CD8-positive, alpha-beta T cell (primary cell): ENCODE measurements at regions of chr3 and their contacts with region 1.

Region 1: GRCh38 chr3:111071257-111072015 is at the start of gene NECTIN3:
- DNase-seq: peak; percentile 64 to 94 (median 85)
- ATAC-seq: peak; percentile 93
- H3K4me3 ChIP-seq: peak within 1 kb of the TSS; percentile 69 to 75
- H3K4me3 Mint-ChIP-seq: peak within 1 kb of the TSS; percentile 98
- H3K27ac ChIP-seq: peak within 1 kb of the TSS in 1 of 2 experiments; percentile 57
- H3K27ac Mint-ChIP-seq: peak within 1 kb of the TSS; percentile 89
- H3K4me1 ChIP-seq: peaks cover 12% of the 10 kb centered on the region
- H3K4me1 Mint-ChIP-seq: peaks cover 35% of the 10 kb centered on the region
- H3K27me3 ChIP-seq: peaks cover 0 to 5% of the 10 kb centered on the region in 2 experiments
- H3K27me3 Mint-ChIP-seq: peaks cover 30% of the 10 kb centered on the region
- CTCF ChIP-seq: no peak
- total RNA-seq, gene NECTIN3: 7.6 to 9.2 TPM

Region 2: DNA sequence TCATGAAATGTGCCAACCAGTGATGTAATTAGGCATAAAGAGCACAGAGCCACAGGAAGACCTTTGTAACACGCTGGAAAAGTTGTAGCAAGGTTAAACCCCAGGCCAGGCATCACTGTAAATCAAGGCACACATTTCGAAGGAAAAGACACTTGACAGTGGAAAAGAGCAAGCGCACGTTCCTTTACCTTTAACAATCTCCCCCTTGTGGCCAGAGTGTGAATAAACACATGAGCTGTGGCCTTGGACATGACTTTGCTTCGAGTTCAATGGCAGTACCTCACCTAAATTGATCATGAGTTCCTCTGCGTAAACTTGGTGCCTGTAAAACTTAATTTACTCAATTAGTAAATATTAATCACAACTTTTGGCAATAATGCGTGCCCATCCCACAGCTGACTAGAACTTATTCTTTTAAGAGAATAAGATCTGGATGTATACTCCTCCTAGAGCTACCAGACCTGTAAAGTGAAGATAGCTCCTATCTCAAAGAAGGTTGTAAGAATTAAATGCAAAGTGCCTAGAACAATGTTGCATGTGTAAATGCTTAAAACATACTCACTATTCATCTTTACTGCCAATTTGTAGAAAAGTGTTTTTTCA is 756.8 kb before region 1 on chr3:
- CTCF ChIA-PET with region 1: interaction called, 3 read pairs
- POLR2A ChIA-PET with region 1: no interaction called
- intact Hi-C with region 1: loop called in 1 of 2 experiments (anchors 10 kb)
- DNase-seq: peak; percentile 1 to 72 (median 55)
- ATAC-seq: peak; percentile 70
- H3K4me3 ChIP-seq: no peak overlapping the region
- H3K4me3 Mint-ChIP-seq: no peak overlapping the region
- H3K27ac ChIP-seq: no peak overlapping the region
- H3K27ac Mint-ChIP-seq: no peak overlapping the region
- H3K4me1 ChIP-seq: no peaks in the 10 kb centered on the region
- H3K4me1 Mint-ChIP-seq: peaks cover 2% of the 10 kb centered on the region
- H3K27me3 ChIP-seq: no peaks in the 10 kb centered on the region
- H3K27me3 Mint-ChIP-seq: peaks cover 4% of the 10 kb centered on the region
- CTCF ChIP-seq: peak; percentile 82

Region 3: GRCh38 chr3:111311709-111312235 is 240.3 kb after region 1 on chr3:
- CTCF ChIA-PET with region 1: no interaction called
- POLR2A ChIA-PET with region 1: no interaction called
- intact Hi-C with region 1: loop called in 1 of 2 experiments (anchors 5 kb)
- DNase-seq: peak in 1 of 9 experiments; percentile 42
- ATAC-seq: peak; percentile 53
- H3K4me3 ChIP-seq: no peak overlapping the region
- H3K4me3 Mint-ChIP-seq: peak overlapping the region; percentile 0
- H3K27ac ChIP-seq: peak overlapping the region; percentile 3 to 78
- H3K27ac Mint-ChIP-seq: peak overlapping the region; percentile 87
- H3K4me1 ChIP-seq: peaks cover 50% of the 10 kb centered on the region
- H3K4me1 Mint-ChIP-seq: peaks cover 27% of the 10 kb centered on the region
- H3K27me3 ChIP-seq: no peaks in the 10 kb centered on the region
- H3K27me3 Mint-ChIP-seq: no peaks in the 10 kb centered on the region
- CTCF ChIP-seq: no peak

Region 4: DNA sequence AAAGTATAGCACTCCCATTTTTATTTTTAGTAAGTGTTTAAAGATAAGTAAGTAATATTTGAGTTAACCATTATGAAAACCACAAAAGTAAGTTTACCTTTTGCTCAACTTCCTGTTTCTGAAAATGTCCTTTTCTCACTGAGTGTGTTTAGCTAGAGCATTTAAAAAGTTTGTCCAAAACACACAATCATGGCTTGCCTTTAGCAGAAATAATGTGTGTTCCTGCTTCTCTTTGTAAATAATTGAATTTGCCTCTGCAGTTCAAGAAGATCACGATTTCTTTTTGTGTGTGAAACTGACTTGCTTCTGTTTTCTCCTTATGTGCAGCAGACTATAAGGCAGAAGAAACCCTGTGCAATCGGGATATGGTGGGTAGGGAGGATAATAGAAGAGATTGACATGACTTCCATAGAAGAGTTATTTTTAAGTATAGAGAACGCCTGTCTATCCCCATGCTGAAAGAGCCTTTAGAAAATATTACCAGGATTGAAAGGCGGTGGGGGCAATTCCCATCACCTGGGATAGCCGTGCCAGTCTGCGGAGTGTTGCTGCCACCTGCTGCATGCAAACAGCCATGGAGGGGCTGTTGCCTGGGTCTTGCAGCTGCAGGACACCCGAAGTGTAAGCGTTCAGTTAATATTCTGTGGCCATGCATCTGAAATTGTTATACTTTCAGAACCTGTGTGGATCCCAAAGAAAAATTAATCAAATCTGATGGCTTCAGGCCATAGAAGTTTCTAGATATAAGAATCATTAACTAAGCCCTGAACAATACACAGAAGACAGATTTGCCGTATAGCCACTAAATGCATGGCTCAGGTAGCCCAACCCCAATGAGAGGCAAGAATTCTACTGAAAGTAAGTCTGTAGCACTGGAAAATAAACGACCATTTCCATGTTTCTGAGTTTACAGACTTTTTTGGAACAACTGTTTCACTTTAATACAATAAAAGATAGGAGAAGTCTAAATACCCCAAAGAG is 468.2 kb after region 1 on chr3:
- CTCF ChIA-PET with region 1: interaction called, 3 read pairs
- POLR2A ChIA-PET with region 1: no interaction called
- intact Hi-C with region 1: loop called (anchors 2 to 5 kb)
- DNase-seq: peak; percentile 19 to 84 (median 70)
- ATAC-seq: peak; percentile 34
- H3K4me3 ChIP-seq: peak overlapping the region; percentile 22 to 34
- H3K4me3 Mint-ChIP-seq: peak overlapping the region; percentile 77
- H3K27ac ChIP-seq: peak overlapping the region; percentile 22 to 57
- H3K27ac Mint-ChIP-seq: peak overlapping the region; percentile 93
- H3K4me1 ChIP-seq: peaks cover 41% of the 10 kb centered on the region
- H3K4me1 Mint-ChIP-seq: peaks cover 69% of the 10 kb centered on the region
- H3K27me3 ChIP-seq: no peaks in the 10 kb centered on the region
- H3K27me3 Mint-ChIP-seq: no peaks in the 10 kb centered on the region
- CTCF ChIP-seq: peak; percentile 96

Region 5: DNA sequence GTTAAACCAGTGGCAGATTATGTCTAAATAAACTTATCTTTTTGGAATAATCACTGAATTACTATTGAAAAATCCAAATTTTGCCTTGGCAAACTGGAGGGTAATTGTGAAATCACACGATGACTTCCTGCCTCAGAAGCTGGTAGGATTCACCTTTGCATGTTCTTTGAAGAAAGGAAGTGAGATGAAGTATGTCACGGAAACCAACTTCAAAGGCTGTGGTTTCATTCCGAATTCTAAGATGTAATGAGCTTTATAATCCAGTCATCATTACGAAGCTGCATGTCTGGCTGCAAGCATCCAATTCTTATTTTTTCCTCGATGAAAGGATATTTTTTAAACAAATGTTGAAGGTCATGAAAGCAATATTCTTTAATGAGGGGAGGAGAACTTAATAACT is 538.8 kb after region 1 on chr3:
- CTCF ChIA-PET with region 1: no interaction called
- POLR2A ChIA-PET with region 1: no interaction called
- intact Hi-C with region 1: loop called (anchors 5 kb)
- DNase-seq: peak in 6 of 9 experiments; percentile 16 to 92 (median 46)
- ATAC-seq: peak; percentile 79
- H3K4me3 ChIP-seq: no peak overlapping the region
- H3K4me3 Mint-ChIP-seq: peak overlapping the region; percentile 64
- H3K27ac ChIP-seq: peak overlapping the region; percentile 14 to 77
- H3K27ac Mint-ChIP-seq: peak overlapping the region; percentile 94
- H3K4me1 ChIP-seq: peaks cover 43% of the 10 kb centered on the region
- H3K4me1 Mint-ChIP-seq: peaks cover 70% of the 10 kb centered on the region
- H3K27me3 ChIP-seq: no peaks in the 10 kb centered on the region
- H3K27me3 Mint-ChIP-seq: no peaks in the 10 kb centered on the region
- CTCF ChIP-seq: no peak

Region 6: GRCh38 chr3:111676211-111677006 is 605.0 kb after region 1 on chr3:
- CTCF ChIA-PET with region 1: no interaction called
- POLR2A ChIA-PET with region 1: no interaction called
- intact Hi-C with region 1: loop called in 1 of 2 experiments (anchors 5 kb)
- DNase-seq: peak in 2 of 9 experiments; percentile 27 to 46
- ATAC-seq: no peak
- H3K4me3 ChIP-seq: peak overlapping the region; percentile 66 to 79
- H3K4me3 Mint-ChIP-seq: peak overlapping the region; percentile 96
- H3K27ac ChIP-seq: peak overlapping the region; percentile 1 to 85
- H3K27ac Mint-ChIP-seq: peak overlapping the region; percentile 99
- H3K4me1 ChIP-seq: peaks cover 68% of the 10 kb centered on the region
- H3K4me1 Mint-ChIP-seq: peaks cover 85% of the 10 kb centered on the region
- H3K27me3 ChIP-seq: no peaks in the 10 kb centered on the region
- H3K27me3 Mint-ChIP-seq: no peaks in the 10 kb centered on the region
- CTCF ChIP-seq: no peak

Region 7: DNA sequence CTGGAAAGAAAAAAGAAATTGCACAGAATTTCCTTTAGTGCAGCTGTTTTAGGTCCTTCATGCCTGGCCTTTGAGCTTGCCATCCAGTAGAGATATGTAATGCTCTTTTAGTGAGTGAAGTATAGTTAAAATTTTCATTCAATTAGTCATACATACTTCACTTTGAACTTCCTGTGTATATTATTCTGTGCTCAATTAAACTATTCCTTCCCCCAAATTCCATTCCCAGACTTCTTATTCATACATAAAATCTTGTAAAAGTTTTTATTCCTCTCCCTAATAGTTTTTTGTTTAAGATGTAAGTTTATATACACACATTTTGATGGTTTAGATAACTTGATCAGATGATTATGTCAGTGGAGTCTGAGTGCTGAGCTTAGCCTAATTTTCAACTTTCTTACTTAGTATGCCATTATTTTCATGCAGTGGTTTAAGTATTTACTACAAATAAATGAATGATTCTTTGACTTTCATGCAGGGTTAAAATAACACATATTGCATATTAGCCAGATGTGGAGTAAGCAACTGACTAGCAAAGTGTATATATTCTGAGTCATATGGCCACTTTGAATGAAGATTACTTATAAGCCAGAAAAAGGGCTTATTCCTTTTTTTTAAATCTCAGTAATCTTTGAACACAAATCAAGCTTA is 864.9 kb after region 1 on chr3:
- CTCF ChIA-PET with region 1: no interaction called
- POLR2A ChIA-PET with region 1: no interaction called
- intact Hi-C with region 1: no loop called
- DNase-seq: no peak
- ATAC-seq: no peak
- H3K4me3 ChIP-seq: no peak overlapping the region
- H3K4me3 Mint-ChIP-seq: no peak overlapping the region
- H3K27ac ChIP-seq: no peak overlapping the region
- H3K27ac Mint-ChIP-seq: no peak overlapping the region
- H3K4me1 ChIP-seq: no peaks in the 10 kb centered on the region
- H3K4me1 Mint-ChIP-seq: no peaks in the 10 kb centered on the region
- H3K27me3 ChIP-seq: no peaks in the 10 kb centered on the region
- H3K27me3 Mint-ChIP-seq: no peaks in the 10 kb centered on the region
- CTCF ChIP-seq: no peak

Region 8: DNA sequence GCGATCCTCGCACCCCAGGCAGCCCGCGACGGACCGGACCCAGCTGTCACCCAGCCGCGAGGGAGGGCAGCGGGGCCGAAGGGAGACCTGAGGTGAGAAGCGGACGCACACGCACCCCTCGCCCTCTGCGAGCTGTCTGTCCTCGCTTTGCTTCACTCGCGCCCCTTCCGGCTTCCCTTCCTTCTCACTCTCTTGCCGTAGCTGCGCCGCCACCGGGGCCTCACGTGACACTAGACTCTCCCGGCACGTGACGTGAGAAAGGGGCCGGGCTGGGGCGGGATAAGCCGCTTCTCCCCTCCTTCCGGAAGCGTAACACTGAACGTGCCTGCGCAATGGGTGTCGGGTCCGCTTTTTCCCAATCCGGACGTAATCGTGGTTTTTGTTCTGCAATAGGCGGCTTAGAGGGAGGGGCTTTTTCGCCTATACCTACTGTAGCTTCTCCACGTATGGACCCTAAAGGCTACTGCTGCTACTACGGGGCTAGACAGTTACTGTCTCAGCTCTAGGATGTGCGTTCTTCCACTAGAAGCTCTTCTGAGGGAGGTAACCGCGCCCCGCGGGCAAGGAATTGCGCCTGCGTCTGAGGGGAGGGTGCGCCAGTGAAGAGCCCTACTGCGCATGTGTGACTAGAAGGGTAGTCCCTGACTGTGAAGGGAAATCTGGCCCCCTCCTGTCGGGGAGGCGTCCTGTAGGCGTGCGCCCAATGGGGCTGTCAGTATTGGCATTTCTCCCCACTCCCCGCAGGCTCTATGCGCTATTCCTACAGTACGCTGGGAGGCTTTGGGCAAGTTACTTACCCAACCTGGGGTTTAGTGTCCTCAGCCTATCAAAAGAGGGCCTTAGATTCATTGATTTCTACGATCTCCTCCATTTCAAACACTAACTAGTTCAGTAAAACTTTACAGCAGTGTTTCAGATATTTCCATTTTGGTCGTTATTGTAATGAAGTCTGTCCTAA is 1490.6 kb after region 1 on chr3 and contains the starts of genes ATG3 and SLC35A5:
- CTCF ChIA-PET with region 1: no interaction called
- POLR2A ChIA-PET with region 1: no interaction called
- intact Hi-C with region 1: loop called in 1 of 2 experiments (anchors 5 kb)
- DNase-seq: peak; percentile 98 to 100 (median 99)
- ATAC-seq: peak; percentile 77
- H3K4me3 ChIP-seq: peak within 1 kb of the TSS; percentile 75 to 82
- H3K4me3 Mint-ChIP-seq: peak within 1 kb of the TSS; percentile 97
- H3K27ac ChIP-seq: peak within 1 kb of the TSS; percentile 83 to 93
- H3K27ac Mint-ChIP-seq: peak within 1 kb of the TSS; percentile 99
- H3K4me1 ChIP-seq: peaks cover 22% of the 10 kb centered on the region
- H3K4me1 Mint-ChIP-seq: peaks cover 47% of the 10 kb centered on the region
- H3K27me3 ChIP-seq: no peaks in the 10 kb centered on the region
- H3K27me3 Mint-ChIP-seq: no peaks in the 10 kb centered on the region
- CTCF ChIP-seq: no peak
- total RNA-seq, gene ATG3: 50.0 to 54.4 TPM
- total RNA-seq, gene SLC35A5: 4.4 to 6.1 TPM